Gastrocnemius medialis (tissue), 4 donors: ENCODE measurements at regions of chr1 and their contacts with region 1.

Region 1: DNA sequence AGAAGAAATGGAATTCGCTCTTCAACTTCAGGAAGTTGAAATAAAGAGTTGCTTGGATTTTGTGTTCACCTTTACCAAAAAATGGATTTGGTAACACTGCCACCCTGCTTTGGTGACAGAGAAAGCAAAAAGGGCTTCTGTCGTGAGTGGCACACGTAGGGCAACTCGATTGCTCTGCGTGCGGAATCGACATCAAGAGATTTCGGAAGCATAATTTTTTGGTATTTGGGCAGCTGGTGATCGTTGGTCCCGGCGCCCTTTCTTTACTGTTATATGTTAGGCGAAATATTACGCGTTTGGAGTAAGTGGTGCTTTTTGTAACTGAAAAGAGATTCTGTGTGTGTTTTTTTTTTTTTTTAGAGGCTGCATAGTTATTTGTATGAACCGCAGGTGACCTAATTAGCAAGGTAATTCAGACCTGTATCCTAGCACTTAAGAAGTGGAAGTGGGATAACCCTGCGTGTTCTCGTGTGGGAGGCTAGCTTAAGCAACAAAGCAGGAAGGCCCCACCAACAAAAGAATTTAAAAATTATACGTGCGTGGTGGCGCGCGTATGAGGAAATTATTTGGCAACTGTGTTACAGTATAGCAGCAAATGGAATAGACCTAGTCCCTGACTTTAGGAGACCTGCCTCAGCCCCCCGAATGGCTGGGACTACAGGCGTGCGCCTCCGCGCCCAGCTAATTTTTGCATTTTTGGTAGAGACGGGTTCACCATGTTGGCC is at the start of gene RNU11:
- DNase-seq: peak; percentile 85 to 92
- ATAC-seq: peak; percentile 83 to 84
- H3K4me3 ChIP-seq: peak within 1 kb of the TSS; percentile 53 to 60 (median 56)
- H3K27ac ChIP-seq: peak within 1 kb of the TSS; percentile 90 to 96 (median 94)
- H3K4me1 ChIP-seq: peaks cover 18 to 29% of the 10 kb centered on the region in 2 donors
- H3K27me3 ChIP-seq: no peaks in the 10 kb centered on the region
- CTCF ChIP-seq: peak in 1 of 5 experiments; percentile 7
- POLR2A ChIP-seq: peak; percentile 99 to 100
- total RNA-seq, gene RNU11: not detected

Region 2: GRCh38 chr1:28494737-28495136 is 153.9 kb before region 1 on chr1:
- in situ Hi-C with region 1: no loop called
- intact Hi-C with region 1: no loop called
- DNase-seq: no peak
- ATAC-seq: no peak
- H3K4me3 ChIP-seq: no peak overlapping the region
- H3K27ac ChIP-seq: no peak overlapping the region
- H3K4me1 ChIP-seq: no peaks in the 10 kb centered on the region
- H3K27me3 ChIP-seq: no peaks in the 10 kb centered on the region
- CTCF ChIP-seq: no peak
- POLR2A ChIP-seq: no peak

Region 3: DNA sequence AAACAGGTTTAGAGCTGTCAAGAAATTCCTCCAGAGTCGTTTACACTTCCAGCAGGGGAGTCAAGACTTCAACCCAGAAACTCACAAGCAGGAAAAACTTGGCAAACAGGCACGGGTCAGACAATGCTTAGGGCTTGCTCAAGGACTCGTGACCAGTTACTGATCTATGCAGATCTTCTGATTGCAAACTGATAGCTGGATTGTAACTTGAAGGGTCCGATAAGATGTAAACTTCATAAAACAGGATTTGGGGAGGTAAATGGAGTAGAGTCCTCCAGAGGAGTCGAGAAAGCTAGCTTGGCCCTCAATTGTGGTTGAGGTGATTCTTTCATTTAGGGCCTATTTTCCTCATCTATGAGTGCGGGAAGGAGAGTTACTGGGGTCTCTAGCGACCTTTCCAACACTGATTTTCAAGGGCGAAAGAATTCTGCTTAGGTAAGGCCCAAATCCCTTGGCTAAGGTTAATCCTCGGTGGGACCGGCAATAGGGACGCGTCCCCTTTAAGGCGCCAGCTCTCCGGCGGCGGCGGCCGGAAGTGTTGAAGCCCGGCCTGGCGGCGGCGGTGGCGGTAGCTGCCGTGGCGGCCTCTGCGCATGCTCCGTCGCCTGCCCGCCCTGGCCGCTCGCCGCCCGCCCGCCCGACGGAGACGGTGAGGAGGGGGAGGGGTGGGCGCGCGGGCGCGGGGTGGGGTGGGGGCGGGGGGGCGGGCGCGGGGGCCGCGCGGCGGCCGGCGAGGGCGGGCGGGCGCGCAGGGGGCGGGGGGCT is 19.7 kb after region 1 on chr1 and contains the start of gene GMEB1:
- in situ Hi-C with region 1: no loop called
- intact Hi-C with region 1: loop called (anchors 1 kb)
- DNase-seq: peak; percentile 74 to 85
- ATAC-seq: peak; percentile 86 to 87
- H3K4me3 ChIP-seq: peak within 1 kb of the TSS; percentile 85 to 98 (median 96)
- H3K27ac ChIP-seq: peak within 1 kb of the TSS; percentile 99 to 100 (median 99)
- H3K4me1 ChIP-seq: peaks cover 10 to 20% of the 10 kb centered on the region in 2 donors
- H3K27me3 ChIP-seq: no peaks in the 10 kb centered on the region
- CTCF ChIP-seq: peak in 1 of 5 experiments; percentile 16
- POLR2A ChIP-seq: no peak
- total RNA-seq, gene GMEB1: 6.2 to 12.0 (median 9.2) TPM